PC-9 (cell line): ENCODE measurements at regions of chr10 and their contacts with region 1.

Region 1: DNA sequence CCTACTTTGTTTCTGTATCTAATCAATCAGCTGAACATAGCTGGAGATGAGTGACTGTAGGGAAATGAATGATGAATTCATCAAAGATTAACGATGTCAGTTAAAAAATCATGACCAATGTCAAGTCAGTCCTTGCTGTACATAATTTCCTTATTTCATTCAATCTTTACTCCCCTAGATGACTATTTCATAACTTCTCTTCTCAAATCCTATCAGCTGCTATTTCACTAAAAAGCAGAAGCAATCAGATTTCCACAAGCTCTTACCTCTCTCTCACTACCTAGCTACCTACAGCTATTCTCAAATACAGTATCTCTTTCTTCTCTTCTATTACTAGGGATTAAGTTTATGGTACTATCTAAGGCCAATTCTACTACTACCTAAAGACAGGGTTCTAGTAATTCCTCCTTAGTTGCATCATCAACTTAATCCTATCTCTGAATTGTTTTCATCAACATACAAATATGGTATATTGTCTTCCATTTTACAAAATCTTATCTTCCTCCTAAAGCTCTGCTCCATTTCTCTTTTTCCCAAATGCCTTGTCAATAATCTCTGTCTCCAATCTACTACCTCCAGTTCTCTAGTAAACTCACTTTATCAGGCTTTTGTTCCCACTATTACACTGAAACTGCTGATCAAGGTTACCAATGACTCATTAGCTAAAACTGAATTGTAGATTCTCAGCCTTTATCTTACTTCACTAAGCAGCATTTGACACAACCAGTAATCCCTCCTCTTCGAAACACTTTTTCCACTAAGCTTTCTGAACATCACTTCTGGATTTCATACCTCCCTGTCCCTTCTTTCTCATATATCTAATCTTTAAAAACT is 28.4 kb downstream of the JMJD1C start:
- DNase-seq: no peak
- H3K4me3 ChIP-seq: no peak overlapping the region
- H3K27ac ChIP-seq: no peak overlapping the region
- H3K4me1 ChIP-seq: peaks cover 23% of the 10 kb centered on the region
- H3K27me3 ChIP-seq: no peaks in the 10 kb centered on the region
- CTCF ChIP-seq: no peak

Region 2: GRCh38 chr10:63236113-63236935 is 201.0 kb before region 1 on chr10:
- CTCF ChIA-PET with region 1: no interaction called
- POLR2A ChIA-PET with region 1: interaction called, 10 read pairs
- intact Hi-C with region 1: no loop called
- DNase-seq: peak; percentile 22 to 91
- H3K4me3 ChIP-seq: no peak overlapping the region
- H3K27ac ChIP-seq: peak overlapping the region; percentile 93
- H3K4me1 ChIP-seq: peaks cover 40% of the 10 kb centered on the region
- H3K27me3 ChIP-seq: no peaks in the 10 kb centered on the region
- CTCF ChIP-seq: no peak

Region 3: GRCh38 chr10:63421591-63421990 is 15.7 kb before region 1 on chr10:
- CTCF ChIA-PET with region 1: no interaction called
- POLR2A ChIA-PET with region 1: no interaction called
- intact Hi-C with region 1: no loop called
- DNase-seq: no peak
- H3K4me3 ChIP-seq: no peak overlapping the region
- H3K27ac ChIP-seq: no peak overlapping the region
- H3K4me1 ChIP-seq: no peaks in the 10 kb centered on the region
- H3K27me3 ChIP-seq: no peaks in the 10 kb centered on the region
- CTCF ChIP-seq: no peak

Region 4: DNA sequence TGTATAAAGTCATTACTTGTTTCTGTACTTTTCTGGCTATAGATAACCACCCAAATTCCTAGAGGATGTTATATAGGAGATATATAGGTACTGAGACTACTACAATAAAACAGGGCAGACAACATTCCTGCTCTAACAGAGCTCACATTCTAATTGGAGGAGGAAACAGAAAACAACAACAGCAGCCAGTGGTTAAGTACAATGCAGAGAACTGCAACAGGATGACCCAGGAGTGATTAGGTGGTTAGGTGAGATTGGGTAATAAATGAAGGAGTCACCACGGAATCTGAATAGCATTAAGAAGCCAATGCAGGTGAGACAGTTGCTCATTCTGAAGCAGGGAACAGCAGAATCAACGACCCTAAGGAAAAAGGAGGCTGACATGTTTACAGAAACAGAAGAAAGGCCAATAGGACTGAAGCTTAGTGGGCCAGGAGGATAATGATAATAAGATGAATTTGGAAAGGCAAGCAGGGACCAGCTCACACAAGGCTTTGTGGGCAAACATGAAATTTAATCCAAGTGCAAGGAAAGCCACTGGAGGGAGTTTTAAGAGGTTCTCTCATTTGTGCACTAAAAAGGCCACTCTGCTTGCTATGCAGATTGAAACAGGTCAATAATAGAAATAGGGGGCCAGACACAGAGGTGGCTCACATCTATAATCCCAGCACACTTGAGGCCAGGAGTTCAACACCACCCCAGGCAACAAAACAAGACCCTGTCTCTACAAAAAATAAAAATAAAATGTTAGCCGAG is 67.0 kb after region 1 on chr10:
- CTCF ChIA-PET with region 1: no interaction called
- POLR2A ChIA-PET with region 1: no interaction called
- intact Hi-C with region 1: loop called (anchors 5 kb)
- DNase-seq: peak; percentile 49 to 97
- H3K4me3 ChIP-seq: 0 out of 2 replicates have a peak overlapping the region, but pooled peaks have one; percentile 21
- H3K27ac ChIP-seq: peak overlapping the region; percentile 54
- H3K4me1 ChIP-seq: peaks cover 29% of the 10 kb centered on the region
- H3K27me3 ChIP-seq: no peaks in the 10 kb centered on the region
- CTCF ChIP-seq: no peak